Activated B cell treated with CpG ODN at 0.5 μM for 24 hours (primary cell): ENCODE measurements at regions of chr6 and their contacts with region 1.

Region 1: DNA sequence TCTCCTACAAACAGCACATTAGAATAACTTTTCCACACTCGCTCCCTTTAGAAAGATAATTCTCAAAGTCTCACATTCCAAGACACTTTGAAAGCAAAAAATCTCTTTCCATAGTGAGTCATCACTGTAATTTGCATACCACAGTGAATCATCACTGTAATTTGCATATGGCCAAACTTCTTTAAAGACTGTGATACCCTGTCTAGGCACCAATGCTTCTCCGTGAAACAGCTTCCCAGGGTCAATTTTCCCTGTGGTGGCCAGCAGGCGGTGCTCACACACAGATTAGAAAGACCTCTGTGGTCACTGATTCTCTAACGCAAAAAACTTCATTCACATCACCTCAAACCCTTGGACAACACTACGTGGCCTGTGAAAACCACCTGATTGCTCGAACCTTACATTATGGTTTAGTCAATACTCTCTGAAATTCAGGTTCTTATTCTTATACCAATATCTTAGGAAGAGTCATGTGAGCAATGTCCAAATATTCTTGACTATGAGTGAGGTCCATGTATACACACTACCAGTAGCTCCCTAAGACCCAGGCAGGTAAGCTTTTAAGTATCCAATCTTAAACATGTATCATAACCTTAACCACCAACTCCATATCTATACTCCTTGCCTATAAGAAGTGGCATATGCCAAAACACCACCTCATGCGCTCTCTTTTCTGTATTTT is 78.5 kb upstream of the PHACTR1 start:
- DNase-seq: no peak
- ATAC-seq: peak; percentile 58
- H3K4me3 Mint-ChIP-seq: no peak overlapping the region
- H3K27ac Mint-ChIP-seq: no peak overlapping the region
- H3K4me1 Mint-ChIP-seq: peaks cover 6% of the 10 kb centered on the region
- H3K27me3 Mint-ChIP-seq: peaks cover 20% of the 10 kb centered on the region
- CTCF ChIP-seq: no peak

Region 2: GRCh38 chr6:12844290-12845223 is 206.5 kb after region 1 on chr6:
- CTCF ChIA-PET with region 1: no interaction called
- POLR2A ChIA-PET with region 1: no interaction called
- intact Hi-C with region 1: loop called (anchors 2 kb)
- DNase-seq: no peak
- ATAC-seq: no peak
- H3K4me3 Mint-ChIP-seq: no peak overlapping the region
- H3K27ac Mint-ChIP-seq: no peak overlapping the region
- H3K4me1 Mint-ChIP-seq: no peaks in the 10 kb centered on the region
- H3K27me3 Mint-ChIP-seq: peaks cover 11% of the 10 kb centered on the region
- CTCF ChIP-seq: no peak

Region 3: DNA sequence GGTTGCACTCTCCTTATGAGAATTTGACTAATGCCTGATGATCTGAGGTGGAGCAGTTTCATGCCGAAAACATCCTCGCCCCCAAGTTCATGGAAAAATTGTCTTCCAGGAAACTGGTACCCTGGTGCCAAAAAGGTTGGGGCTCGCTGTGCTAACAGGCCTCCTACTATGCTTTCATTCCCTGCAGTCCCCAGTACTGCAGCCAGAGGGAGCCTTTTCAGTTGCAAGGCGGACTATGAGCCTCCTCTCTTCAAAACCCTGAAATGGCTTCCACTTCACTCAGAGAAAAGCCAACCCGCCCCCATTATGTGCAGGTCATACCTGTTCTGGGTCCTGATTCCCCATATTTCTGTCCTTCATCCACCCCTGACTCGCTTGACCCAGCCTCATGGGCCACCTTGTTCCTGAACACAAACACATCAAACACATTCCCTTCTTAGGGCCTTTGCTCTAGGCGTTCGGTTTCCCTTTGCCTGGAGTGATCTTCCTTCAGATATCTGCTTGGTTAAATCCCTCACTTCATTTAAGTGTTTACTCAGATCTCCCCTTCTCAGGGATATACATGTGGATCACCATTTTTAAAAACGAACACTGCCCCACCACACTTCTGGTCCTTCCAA is 252.2 kb after region 1 on chr6:
- CTCF ChIA-PET with region 1: interaction called, 6 read pairs
- POLR2A ChIA-PET with region 1: no interaction called
- intact Hi-C with region 1: loop called (anchors 1 kb)
- DNase-seq: no peak
- ATAC-seq: no peak
- H3K4me3 Mint-ChIP-seq: no peak overlapping the region
- H3K27ac Mint-ChIP-seq: no peak overlapping the region
- H3K4me1 Mint-ChIP-seq: peaks cover 3% of the 10 kb centered on the region
- H3K27me3 Mint-ChIP-seq: peaks cover 5% of the 10 kb centered on the region
- CTCF ChIP-seq: no peak